ENCODE measurements at regions of chr17 and their contacts with region 1.

Region 1: DNA sequence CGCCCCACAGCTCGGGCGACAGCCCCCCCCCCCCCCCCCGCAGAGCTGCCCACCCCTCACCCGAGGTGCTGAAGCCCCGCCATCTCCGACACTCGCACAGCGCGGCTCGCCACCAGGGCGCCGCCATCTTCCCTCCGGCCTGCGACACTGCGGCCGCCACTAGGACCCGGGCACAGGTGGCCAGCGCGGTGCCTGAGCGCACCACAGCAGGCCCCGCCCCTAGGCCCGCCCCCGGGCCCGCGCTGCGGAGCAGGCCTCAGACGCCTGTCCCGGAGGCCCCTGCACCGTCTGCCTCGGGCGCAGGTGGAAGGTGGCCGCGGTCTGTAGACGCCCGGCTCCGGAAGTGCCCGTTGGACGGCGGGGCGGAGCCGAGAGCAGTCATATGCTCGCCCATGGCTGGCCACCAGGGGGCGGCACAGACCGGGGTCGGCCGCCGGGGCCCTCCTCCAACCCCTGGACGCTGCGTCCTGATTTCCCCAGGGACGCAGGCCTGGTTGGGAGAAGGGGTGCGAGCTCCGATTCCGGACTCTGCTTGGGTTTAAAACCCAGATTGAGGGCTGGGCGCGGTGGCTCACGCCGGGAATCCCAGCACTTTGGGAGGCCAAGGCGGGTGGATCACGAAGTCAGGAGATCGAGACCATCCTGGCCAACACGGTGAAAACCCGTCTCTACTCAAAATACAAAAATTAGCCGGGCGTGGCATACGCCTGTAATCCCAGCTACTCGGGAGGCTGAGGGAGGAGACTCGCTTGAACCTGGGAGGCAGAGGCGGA is at the start of gene MRPL38:
- DNase-seq: peak; percentile 96
- ATAC-seq: peak; percentile 91
- total RNA-seq, gene MRPL38: 124 TPM

Region 2: GRCh38 chr17:76005263-76006149 is 100.6 kb after region 1 on chr17:
- intact Hi-C with region 1: loop called (anchors 10 kb)
- DNase-seq: peak; percentile 64
- ATAC-seq: peak; percentile 78